Psoas muscle (tissue), 8 donors: ENCODE measurements at regions of chr5 and their contacts with region 1.

Region 1: GRCh38 chr5:165209086-165209727 is 1703.8 kb downstream of the MAT2B start:
- DNase-seq: no peak
- ATAC-seq: no peak
- H3K4me3 ChIP-seq: no peak overlapping the region
- H3K27ac ChIP-seq: no peak overlapping the region
- H3K4me1 ChIP-seq: no peaks in the 10 kb centered on the region
- H3K27me3 ChIP-seq: no peaks in the 10 kb centered on the region
- CTCF ChIP-seq: peak; percentile 41

Region 2: GRCh38 chr5:163564321-163564938 is 1644.8 kb before region 1 on chr5:
- intact Hi-C with region 1: loop called (anchors 10 kb)
- DNase-seq: no peak
- ATAC-seq: peak in 2 of 4 donors; percentile 58 to 70
- H3K4me3 ChIP-seq: no peak overlapping the region
- H3K27ac ChIP-seq: no peak overlapping the region
- H3K4me1 ChIP-seq: peaks cover 9% of the 10 kb centered on the region
- H3K27me3 ChIP-seq: peaks cover 7 to 35% (median 10%) of the 10 kb centered on the region in 3 donors
- CTCF ChIP-seq: peak; percentile 93

Region 3: DNA sequence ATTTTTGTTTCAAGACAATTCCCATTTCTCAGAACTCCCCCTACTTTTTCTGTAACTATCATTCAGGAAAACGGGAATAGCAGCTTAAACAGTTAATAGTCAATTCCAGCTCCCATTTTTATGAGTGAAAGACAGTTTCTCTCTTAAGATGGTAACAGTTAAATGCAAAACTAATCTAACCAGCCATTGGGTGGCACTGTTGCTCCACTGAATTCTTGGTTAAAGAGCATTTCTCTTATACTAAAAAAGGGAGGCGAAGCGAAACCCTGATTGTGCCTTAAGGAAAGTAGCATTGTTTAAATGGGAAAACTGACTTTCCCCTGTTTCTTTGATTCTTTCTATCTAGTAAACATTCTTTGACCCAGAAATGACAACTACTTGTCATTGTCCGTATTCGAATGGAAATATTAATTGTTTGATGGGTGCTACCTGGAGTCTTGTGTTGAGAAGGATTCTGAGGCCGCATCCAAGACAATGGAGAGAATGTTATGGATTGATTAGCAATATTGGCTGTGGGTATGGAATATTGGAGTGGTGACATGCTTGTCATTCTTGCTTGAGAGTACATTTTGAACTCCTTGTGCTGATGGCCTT is 1196.0 kb before region 1 on chr5:
- intact Hi-C with region 1: loop called in 1 of 2 experiments (anchors 5 kb)
- DNase-seq: peak in 1 of 2 donors; percentile 8
- ATAC-seq: peak in 1 of 4 donors; percentile 51
- H3K4me3 ChIP-seq: no peak overlapping the region
- H3K27ac ChIP-seq: no peak overlapping the region
- H3K4me1 ChIP-seq: no peaks in the 10 kb centered on the region
- H3K27me3 ChIP-seq: no peaks in the 10 kb centered on the region
- CTCF ChIP-seq: peak; percentile 51